Activated B cell treated with CpG ODN at 0.5 μM for 24 hours (primary cell): ENCODE measurements at regions of chr2 and their contacts with region 1.

Region 1: GRCh38 chr2:43194121-43194869 is 32.1 kb downstream of the ZFP36L2 start:
- DNase-seq: no peak
- ATAC-seq: peak; percentile 6
- H3K4me3 Mint-ChIP-seq: peak overlapping the region; percentile 35
- H3K27ac Mint-ChIP-seq: peak overlapping the region; percentile 79
- H3K4me1 Mint-ChIP-seq: peaks cover 44% of the 10 kb centered on the region
- H3K27me3 Mint-ChIP-seq: no peaks in the 10 kb centered on the region
- CTCF ChIP-seq: no peak

Region 2: DNA sequence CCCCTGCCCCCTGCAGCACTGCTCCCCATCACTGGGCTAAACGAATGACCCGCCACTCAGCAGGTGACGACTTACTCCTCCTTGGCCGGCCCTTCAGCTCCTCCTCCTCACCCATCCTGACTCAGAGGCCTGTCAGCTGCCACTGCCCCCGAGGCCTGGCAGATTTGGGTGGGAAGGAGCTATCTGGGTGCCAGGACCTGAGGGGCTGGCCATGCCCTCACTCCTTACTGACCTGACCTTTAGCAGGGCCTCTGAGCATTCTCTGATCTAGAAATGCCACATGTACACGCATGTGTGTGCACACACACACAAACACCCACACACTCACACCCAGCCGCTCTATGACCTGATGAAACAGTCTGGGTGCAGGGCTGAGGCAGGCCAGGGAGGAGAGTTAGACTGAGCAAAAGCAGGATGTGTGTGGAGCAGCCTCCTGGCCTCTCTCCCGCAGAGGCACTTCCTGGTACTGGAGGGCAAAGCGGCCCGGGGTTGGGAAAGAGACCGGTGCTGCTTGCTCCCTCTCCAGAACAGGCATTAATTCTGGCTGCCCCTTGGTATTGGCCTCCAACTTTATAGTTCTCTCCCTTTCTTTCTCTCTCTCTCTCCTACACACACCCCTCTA is 35.9 kb before region 1 on chr2:
- CTCF ChIA-PET with region 1: no interaction called
- POLR2A ChIA-PET with region 1: interaction called, 4 read pairs
- intact Hi-C with region 1: loop called (anchors 1 kb)
- DNase-seq: no peak
- ATAC-seq: peak; percentile 9
- H3K4me3 Mint-ChIP-seq: peak overlapping the region; percentile 71
- H3K27ac Mint-ChIP-seq: peak overlapping the region; percentile 96
- H3K4me1 Mint-ChIP-seq: peaks cover 47% of the 10 kb centered on the region
- H3K27me3 Mint-ChIP-seq: no peaks in the 10 kb centered on the region
- CTCF ChIP-seq: no peak

Region 3: DNA sequence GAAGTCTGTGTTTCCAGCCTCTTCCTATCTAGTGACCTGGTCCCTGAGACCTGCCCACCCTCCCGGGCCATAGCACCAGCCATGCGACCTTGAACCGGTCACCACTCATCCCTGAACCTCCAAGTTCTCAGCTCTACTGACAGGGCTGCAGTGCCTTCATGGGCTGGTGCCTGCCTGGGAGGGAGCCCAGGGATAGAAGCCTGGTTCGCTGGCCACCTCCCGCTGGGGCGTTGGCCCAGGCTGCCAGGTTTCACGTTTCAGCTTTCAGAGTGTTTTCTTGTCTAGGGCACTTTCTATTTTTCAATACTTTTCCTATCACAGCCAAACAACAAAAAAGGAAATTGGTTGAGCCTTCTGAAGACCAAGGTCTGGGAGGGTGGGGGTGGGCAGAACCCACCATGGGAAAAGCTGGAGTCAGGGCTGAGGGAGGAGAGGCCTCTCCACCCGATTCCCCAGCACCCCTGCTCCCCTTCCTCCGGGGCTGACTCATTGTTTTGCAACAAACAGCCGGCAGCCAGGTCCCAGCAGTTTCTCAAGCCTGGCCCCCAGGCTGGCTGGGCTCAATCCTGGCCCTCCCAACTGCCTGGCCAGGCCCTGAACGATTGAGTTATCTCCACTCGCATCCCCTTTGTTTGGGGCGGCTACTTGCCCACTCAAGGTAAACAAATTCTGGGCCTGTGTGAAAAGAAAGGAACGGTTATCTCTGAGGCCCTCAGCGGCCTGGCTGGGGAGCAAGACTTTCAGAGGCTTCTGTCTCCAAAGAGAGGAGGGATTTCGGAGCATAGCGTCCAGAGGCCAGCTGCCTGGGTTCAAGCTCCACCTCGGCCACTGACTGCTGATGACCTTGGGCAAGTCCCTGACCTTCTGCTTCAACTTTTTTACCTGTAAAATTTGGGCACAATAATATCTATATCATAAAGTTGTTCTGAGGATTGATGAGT is 15.4 kb before region 1 on chr2:
- CTCF ChIA-PET with region 1: interaction called, 3 read pairs
- POLR2A ChIA-PET with region 1: interaction called, 43 read pairs
- intact Hi-C with region 1: loop called (anchors 1 kb)
- DNase-seq: no peak
- ATAC-seq: no peak
- H3K4me3 Mint-ChIP-seq: no peak overlapping the region
- H3K27ac Mint-ChIP-seq: no peak overlapping the region
- H3K4me1 Mint-ChIP-seq: peaks cover 53% of the 10 kb centered on the region
- H3K27me3 Mint-ChIP-seq: no peaks in the 10 kb centered on the region
- CTCF ChIP-seq: no peak

Region 4: DNA sequence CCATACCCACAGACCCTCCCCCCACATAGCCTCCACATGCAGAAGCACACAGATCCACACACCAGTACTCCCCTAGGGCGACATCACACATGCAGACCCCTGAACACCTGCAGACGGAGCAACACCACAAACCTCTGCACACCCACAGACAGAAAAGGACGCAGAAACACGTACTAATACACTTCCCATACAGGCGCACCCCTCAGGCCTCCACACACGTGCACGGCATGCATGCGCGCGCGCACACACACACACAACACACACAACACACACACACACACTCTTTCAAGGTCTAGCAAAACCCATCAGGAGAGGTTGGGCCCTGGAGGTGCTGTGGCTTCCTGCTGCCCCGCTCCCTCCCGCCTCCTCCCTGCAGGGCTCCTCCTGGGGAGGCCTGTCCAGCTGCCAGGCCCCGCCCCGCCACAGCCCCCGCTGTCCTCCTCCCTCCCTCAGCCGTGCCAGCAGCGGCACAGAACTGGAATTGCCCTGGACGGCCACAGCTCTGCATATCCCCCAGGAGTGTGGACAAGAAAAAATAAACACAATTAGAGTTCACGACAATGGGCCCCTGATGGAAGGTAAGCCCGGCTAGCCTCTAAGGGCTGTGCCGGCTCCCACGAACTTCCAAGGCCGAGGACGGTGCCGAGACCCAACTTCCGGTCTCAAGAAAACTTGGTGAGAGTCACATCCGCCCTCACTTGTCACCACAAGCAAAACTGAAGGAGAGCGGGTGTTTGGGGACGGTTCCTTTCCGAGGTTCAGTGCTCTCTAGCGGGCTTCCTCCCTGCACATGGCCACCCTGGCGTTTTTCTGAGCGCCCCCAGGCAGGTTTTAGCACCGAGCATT is 25.3 kb after region 1 on chr2:
- CTCF ChIA-PET with region 1: interaction called, 4 read pairs
- POLR2A ChIA-PET with region 1: interaction called, 18 read pairs
- intact Hi-C with region 1: loop called (anchors 1 kb)
- DNase-seq: peak; percentile 58
- ATAC-seq: peak; percentile 54
- H3K4me3 Mint-ChIP-seq: peak overlapping the region; percentile 92
- H3K27ac Mint-ChIP-seq: peak overlapping the region; percentile 99
- H3K4me1 Mint-ChIP-seq: peaks cover 71% of the 10 kb centered on the region
- H3K27me3 Mint-ChIP-seq: peaks cover 2% of the 10 kb centered on the region
- CTCF ChIP-seq: no peak